HepG2 (cell line): ENCODE measurements at regions of chr2 and their contacts with region 1.

Region 1: DNA sequence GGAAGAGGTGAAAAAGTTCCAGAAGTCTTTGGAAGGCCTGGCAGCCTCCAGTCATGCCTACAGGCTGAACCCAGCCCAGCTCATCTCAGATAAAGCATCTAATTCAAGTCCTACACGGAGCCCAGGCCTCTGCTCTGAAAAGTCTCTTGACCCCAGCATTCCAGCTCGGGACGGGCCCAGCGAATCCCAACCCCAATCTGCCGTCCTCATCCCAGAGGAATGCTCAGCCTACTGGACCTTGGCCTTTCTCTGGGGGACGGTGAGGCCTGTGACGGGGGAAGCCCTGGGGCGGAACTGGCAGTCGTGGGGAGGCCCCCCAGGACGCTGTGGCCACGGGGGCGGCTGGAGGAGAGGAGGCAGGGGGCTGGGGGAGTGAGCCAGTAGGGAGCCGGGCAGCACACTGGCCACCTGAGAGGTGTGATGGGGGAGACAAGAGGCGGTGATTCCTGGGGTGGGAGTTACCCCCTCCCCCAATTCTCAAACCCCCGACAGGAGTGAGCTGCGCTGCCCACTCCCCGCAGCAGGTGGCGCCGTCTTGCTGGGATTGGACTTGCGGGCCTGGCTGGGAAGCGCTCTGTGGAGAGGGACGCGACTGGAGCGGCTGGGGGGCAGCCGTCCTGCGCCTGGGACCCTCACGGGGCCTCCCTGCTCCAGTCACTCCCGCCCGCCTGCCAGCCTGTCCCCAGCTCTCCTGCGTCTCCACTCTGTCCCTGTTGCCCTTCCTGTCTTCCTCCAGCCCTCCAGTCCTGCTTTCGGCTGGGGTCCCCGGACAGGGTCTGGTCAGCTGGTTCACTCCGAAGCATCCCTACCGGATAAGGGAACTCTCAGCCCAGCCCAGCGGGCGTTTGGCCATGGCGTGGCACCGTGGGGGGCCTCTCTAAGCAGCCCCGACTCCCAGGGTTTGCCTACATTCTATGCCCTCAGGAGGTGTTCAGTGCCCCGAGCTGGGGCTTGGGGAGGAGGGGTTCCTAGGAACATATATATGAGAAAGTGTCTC is 182.6 kb upstream of the HAAO start:
- DNase-seq: peak; percentile 97
- ATAC-seq: peak; percentile 60
- H3K4me3 ChIP-seq: peak overlapping the region; percentile 8 to 67 (median 42); a peak in 4 of 6 replicates
- H3K27ac ChIP-seq: peak overlapping the region; percentile 93
- H3K4me1 ChIP-seq: peaks cover 99% of the 10 kb centered on the region
- H3K27me3 ChIP-seq: no peaks in the 10 kb centered on the region
- CTCF ChIP-seq: peak; percentile 99
- EP300 ChIP-seq: peak; percentile 63 to 93; a peak in 3 of 4 replicates
- POLR2A ChIP-seq: peak in 1 of 2 experiments; percentile 63; a peak in 2 of 4 replicates
- RAD21 ChIP-seq: peak; percentile 100

Region 2: DNA sequence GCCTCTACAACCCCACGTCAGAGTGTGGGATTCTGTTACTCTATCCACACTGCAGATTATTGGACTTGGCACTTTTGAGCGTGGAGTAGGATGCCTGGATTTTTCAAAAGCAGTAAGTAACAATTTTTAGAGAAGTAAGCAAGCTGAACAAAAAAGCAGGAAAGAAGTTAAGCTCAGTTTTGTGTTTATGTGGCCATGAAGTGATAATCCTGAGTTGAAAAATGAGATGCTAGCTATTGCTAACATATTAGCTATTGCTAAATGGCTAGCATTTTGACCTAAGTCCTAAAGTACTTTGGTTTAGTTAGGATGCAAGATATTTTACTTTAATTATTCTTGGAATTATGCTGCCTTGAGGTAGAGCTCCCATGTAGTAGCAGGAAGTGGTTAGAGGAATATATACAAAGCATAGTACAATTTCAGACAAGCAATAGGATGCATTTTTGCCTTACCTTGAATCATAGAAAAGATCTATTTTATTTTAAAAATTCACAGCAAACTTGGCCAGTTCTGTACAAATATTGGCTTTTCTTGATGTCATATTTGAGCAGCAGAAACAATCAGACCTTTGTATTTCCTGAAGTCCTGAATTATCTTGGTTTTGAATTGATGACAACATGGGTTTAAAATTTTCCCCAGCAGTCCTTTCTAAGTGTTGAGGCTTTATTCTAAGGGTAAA is 688.6 kb before region 1 on chr2:
- CTCF ChIA-PET with region 1: no interaction called
- POLR2A ChIA-PET with region 1: no interaction called
- in situ Hi-C with region 1: no loop called
- intact Hi-C with region 1: no loop called
- DNase-seq: peak; percentile 82
- ATAC-seq: peak; percentile 47
- H3K4me3 ChIP-seq: no peak overlapping the region
- H3K27ac ChIP-seq: peak overlapping the region; percentile 70
- H3K4me1 ChIP-seq: peaks cover 58% of the 10 kb centered on the region
- H3K27me3 ChIP-seq: no peaks in the 10 kb centered on the region
- CTCF ChIP-seq: no peak
- EP300 ChIP-seq: peak in 1 of 2 experiments; percentile 28; a peak in 1 of 4 replicates
- POLR2A ChIP-seq: no peak
- RAD21 ChIP-seq: peak; percentile 18; the same call in 1 of the 2 replicates

Region 3: GRCh38 chr2:42906557-42907411 is 68.2 kb before region 1 on chr2:
- CTCF ChIA-PET with region 1: no interaction called
- POLR2A ChIA-PET with region 1: no interaction called
- in situ Hi-C with region 1: no loop called
- intact Hi-C with region 1: no loop called
- DNase-seq: no peak
- ATAC-seq: peak; percentile 74
- H3K4me3 ChIP-seq: peak overlapping the region; percentile 49 to 62 (median 51)
- H3K27ac ChIP-seq: no peak overlapping the region
- H3K4me1 ChIP-seq: peaks cover 41% of the 10 kb centered on the region
- H3K27me3 ChIP-seq: peaks cover 9 to 69% of the 10 kb centered on the region in 2 experiments; a peak in 4 of 5 replicates
- CTCF ChIP-seq: no peak
- EP300 ChIP-seq: no peak
- POLR2A ChIP-seq: no peak
- RAD21 ChIP-seq: no peak

Region 4: DNA sequence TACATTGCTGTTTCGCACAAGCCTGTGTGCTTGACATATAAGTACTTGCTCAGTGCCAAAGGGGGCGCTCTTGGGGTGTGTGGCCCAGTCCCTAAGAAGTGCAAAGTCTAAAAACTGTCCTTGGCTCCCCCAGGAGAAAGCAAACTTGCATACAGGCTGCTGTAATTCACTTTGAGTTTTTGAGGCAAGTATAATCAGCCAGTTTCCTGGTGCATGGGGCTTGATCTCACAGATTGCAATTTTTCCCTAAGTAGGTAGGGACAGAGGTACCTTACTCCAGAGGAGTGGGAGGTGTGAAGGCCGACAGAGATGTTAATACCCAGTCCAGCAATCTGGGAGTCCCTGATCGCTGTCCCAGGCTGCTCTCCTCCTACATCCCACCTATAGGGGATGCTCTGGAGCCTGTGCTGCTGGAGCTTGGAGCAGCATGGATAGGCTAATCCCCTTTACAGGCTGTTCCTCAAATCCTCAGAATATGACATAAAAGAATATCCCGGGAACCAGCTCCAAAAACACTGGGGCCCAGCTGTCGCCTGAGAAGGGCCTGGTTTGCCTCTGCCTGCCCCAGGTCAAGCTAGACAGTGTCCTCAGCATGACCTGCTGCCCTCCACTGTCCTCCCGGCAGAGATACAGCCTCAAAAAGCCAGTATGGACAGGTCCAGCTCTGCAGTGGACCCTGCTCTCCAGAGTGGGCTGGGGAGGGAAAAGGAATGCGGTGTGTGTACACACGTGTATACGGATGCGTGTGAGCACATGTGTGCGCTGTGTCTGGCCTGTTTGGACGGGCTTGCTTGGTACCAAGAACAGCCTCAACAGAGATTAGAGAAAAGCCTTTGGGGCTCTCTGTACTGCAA is 46.1 kb before region 1 on chr2:
- CTCF ChIA-PET with region 1: no interaction called
- POLR2A ChIA-PET with region 1: interaction called, 49 read pairs
- in situ Hi-C with region 1: no loop called
- intact Hi-C with region 1: loop called (anchors 2 kb)
- DNase-seq: peak; percentile 90
- ATAC-seq: peak; percentile 54
- H3K4me3 ChIP-seq: peak overlapping the region; percentile 52 to 74 (median 62)
- H3K27ac ChIP-seq: peak overlapping the region; percentile 88
- H3K4me1 ChIP-seq: peaks cover 98% of the 10 kb centered on the region
- H3K27me3 ChIP-seq: no peaks in the 10 kb centered on the region
- CTCF ChIP-seq: peak; percentile 78
- EP300 ChIP-seq: peak in 1 of 2 experiments; percentile 70; a peak in 1 of 4 replicates
- POLR2A ChIP-seq: no peak
- RAD21 ChIP-seq: no peak

Region 5: DNA sequence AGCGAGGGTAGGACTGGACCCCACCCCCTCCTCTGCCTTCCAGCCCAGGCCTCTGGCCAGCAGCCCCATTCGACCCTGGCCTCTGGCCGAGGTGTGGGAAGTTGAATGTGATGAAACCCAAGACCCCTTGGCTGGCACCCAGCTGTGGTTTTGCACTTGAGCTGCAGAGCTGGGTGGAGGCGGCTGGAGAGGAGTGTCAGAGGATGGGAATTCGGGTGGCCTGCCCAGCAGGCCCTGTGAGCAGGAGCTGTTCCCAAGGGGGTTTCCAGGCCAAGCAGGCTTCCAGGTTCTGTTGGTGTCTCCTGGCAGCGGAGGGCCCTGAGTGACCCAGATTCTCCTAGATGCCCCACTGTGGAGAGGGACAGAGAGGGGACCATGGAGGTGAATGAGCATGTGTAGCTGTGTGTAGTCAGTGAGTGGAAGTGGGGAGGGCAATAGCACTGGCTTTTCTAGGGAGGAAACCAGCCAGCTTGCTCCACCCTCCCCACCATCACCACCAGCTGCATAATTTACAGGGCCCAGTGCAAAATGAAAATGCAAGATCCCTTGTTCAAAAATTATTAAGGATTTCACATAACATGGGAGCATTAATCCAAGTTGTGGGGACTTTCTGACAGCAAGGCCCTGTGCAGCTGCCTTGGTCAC is 10.5 kb before region 1 on chr2:
- CTCF ChIA-PET with region 1: no interaction called
- POLR2A ChIA-PET with region 1: interaction called, 98 read pairs
- in situ Hi-C with region 1: no loop called
- intact Hi-C with region 1: loop called (anchors 2 kb)
- DNase-seq: no peak
- ATAC-seq: no peak
- H3K4me3 ChIP-seq: no peak overlapping the region
- H3K27ac ChIP-seq: no peak overlapping the region
- H3K4me1 ChIP-seq: peaks cover 75% of the 10 kb centered on the region
- H3K27me3 ChIP-seq: no peaks in the 10 kb centered on the region
- CTCF ChIP-seq: no peak
- EP300 ChIP-seq: no peak
- POLR2A ChIP-seq: no peak
- RAD21 ChIP-seq: no peak

Region 6: DNA sequence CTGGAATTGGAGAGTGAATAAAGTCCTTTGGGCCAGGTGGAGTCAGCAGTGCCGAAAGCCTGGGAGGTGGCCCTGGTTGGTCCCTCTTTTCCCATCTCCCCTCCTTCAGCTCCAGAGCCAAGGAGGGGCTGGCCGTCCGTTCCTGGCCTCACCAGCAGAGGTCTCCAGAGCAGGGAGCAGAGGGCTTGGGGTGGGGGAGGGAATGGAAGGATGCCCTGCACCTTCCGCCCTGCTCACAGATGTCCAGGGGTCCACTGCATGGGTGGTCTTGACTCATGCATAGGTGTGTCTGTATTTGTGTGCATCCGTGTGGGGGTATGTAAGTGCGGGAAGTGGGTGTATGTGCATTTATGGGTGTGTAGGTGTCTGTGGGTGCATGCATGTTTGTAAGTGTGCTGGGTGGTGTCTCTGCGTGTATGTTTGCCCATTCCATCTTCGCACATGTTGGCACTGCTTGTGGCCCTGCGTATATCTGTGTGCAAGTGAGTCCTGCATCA is 49.5 kb after region 1 on chr2:
- CTCF ChIA-PET with region 1: interaction called, 25 read pairs
- POLR2A ChIA-PET with region 1: interaction called, 555 read pairs
- in situ Hi-C with region 1: loop called (anchors 5 kb)
- intact Hi-C with region 1: loop called (anchors 1 kb)
- DNase-seq: no peak
- ATAC-seq: peak; percentile 83
- H3K4me3 ChIP-seq: no peak overlapping the region
- H3K27ac ChIP-seq: no peak overlapping the region
- H3K4me1 ChIP-seq: peaks cover 60% of the 10 kb centered on the region
- H3K27me3 ChIP-seq: no peaks in the 10 kb centered on the region
- CTCF ChIP-seq: peak; percentile 98
- EP300 ChIP-seq: peak in 1 of 2 experiments; percentile 19; a peak in 1 of 4 replicates
- POLR2A ChIP-seq: no peak
- RAD21 ChIP-seq: peak; percentile 94

Region 7: DNA sequence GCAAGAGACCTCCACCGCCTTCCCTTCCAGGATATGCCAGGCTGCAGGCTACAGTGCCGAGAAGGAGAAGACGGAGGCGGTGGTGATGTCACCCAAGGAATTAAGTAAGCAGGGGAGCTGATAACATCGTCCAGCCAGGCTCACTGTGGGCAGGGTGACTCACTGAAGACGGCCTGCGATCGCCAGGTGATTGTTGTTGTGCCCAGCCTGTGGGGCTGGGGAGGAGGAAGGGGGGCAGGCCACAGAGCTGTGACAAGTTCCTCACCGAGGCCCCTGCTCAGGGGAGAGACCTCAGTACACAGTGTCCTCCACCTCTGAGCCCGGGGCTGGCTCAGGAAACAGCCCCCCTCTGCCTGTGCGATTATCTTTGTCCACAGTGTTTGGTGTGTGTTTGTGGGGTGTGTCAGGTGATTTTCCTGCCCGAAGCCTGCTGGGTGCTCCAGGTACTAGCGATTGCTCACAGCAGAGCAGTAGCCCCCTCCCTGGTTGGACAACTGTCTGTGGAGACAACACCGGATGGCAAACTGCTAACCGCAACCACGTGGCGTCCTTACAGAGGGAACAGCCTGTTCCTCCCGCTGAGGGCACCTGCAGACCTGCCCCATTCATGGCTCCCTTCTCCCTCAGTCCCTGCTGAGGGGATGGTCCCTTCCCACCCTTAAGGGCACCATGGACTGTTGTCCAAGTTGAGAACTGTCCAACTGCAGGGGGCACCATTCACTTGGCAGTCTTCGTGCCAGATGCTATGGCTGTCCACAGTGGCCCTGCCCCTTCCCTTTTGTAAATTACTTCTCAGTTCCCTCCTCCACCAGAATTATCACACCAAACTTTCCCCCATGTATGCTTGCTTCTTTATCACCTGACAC is 156.2 kb after region 1 on chr2:
- CTCF ChIA-PET with region 1: interaction called, 5 read pairs
- POLR2A ChIA-PET with region 1: interaction called, 6 read pairs
- in situ Hi-C with region 1: loop called (anchors 5 kb)
- intact Hi-C with region 1: loop called (anchors 1 kb)
- DNase-seq: peak; percentile 80
- ATAC-seq: peak; percentile 68
- H3K4me3 ChIP-seq: peak overlapping the region in 1 of 3 experiments; percentile 34; a peak in 2 of 6 replicates
- H3K27ac ChIP-seq: peak overlapping the region; percentile 11
- H3K4me1 ChIP-seq: peaks cover 86% of the 10 kb centered on the region
- H3K27me3 ChIP-seq: no peaks in the 10 kb centered on the region
- CTCF ChIP-seq: peak; percentile 96
- EP300 ChIP-seq: peak in 1 of 2 experiments; percentile 15; a peak in 1 of 4 replicates
- POLR2A ChIP-seq: no peak
- RAD21 ChIP-seq: peak; percentile 97

Region 8: DNA sequence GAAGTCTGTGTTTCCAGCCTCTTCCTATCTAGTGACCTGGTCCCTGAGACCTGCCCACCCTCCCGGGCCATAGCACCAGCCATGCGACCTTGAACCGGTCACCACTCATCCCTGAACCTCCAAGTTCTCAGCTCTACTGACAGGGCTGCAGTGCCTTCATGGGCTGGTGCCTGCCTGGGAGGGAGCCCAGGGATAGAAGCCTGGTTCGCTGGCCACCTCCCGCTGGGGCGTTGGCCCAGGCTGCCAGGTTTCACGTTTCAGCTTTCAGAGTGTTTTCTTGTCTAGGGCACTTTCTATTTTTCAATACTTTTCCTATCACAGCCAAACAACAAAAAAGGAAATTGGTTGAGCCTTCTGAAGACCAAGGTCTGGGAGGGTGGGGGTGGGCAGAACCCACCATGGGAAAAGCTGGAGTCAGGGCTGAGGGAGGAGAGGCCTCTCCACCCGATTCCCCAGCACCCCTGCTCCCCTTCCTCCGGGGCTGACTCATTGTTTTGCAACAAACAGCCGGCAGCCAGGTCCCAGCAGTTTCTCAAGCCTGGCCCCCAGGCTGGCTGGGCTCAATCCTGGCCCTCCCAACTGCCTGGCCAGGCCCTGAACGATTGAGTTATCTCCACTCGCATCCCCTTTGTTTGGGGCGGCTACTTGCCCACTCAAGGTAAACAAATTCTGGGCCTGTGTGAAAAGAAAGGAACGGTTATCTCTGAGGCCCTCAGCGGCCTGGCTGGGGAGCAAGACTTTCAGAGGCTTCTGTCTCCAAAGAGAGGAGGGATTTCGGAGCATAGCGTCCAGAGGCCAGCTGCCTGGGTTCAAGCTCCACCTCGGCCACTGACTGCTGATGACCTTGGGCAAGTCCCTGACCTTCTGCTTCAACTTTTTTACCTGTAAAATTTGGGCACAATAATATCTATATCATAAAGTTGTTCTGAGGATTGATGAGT is 203.9 kb after region 1 on chr2:
- CTCF ChIA-PET with region 1: no interaction called
- POLR2A ChIA-PET with region 1: interaction called, 21 read pairs
- in situ Hi-C with region 1: no loop called
- intact Hi-C with region 1: no loop called
- DNase-seq: peak; percentile 90
- ATAC-seq: peak; percentile 88
- H3K4me3 ChIP-seq: peak overlapping the region; percentile 43 to 62 (median 61)
- H3K27ac ChIP-seq: peak overlapping the region; percentile 81
- H3K4me1 ChIP-seq: peaks cover 77% of the 10 kb centered on the region
- H3K27me3 ChIP-seq: no peaks in the 10 kb centered on the region
- CTCF ChIP-seq: peak; percentile 1; the same call in 1 of the 2 replicates
- EP300 ChIP-seq: peak in 1 of 2 experiments; percentile 77; a peak in 2 of 4 replicates
- POLR2A ChIP-seq: no peak; a peak in 1 of 4 replicates
- RAD21 ChIP-seq: peak; percentile 20; the same call in 1 of the 2 replicates

Region 9: GRCh38 chr2:43542285-43542937 is 567.4 kb after region 1 on chr2:
- CTCF ChIA-PET with region 1: no interaction called
- POLR2A ChIA-PET with region 1: no interaction called
- in situ Hi-C with region 1: no loop called
- intact Hi-C with region 1: loop called (anchors 1 kb)
- DNase-seq: peak; percentile 54
- ATAC-seq: no peak
- H3K4me3 ChIP-seq: no peak overlapping the region
- H3K27ac ChIP-seq: no peak overlapping the region
- H3K4me1 ChIP-seq: peaks cover 11% of the 10 kb centered on the region
- H3K27me3 ChIP-seq: no peaks in the 10 kb centered on the region
- CTCF ChIP-seq: peak; percentile 67
- EP300 ChIP-seq: no peak
- POLR2A ChIP-seq: no peak
- RAD21 ChIP-seq: 0 out of 2 replicates have a peak, but pooled peaks have one; percentile 23